ENCODE measurements at regions of chr9 and their contacts with region 1.

Region 1: DNA sequence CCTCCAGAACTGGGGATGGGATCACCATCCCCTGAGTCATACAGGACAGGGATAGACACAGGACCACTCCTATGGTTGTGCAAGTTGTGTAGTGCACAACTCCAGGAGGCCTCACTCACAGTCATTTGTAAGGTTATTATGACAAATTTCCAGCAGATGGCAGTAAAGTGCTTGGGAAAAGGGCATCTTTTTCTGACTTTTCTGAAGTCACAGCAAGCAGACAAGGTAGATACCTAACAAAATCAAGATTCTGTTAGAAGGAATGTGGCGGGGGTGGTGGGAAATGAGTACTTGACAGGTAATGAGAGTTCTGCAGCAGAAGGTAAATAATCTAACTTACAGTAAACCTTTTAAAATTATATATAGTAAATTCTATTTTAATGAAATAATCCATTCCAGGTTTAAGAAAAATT is 16.7 kb upstream of the KIF27 start:
- DNase-seq: no peak
- H3K4me3 ChIP-seq: no peak overlapping the region
- CTCF ChIP-seq: peak; percentile 45

Region 2: DNA sequence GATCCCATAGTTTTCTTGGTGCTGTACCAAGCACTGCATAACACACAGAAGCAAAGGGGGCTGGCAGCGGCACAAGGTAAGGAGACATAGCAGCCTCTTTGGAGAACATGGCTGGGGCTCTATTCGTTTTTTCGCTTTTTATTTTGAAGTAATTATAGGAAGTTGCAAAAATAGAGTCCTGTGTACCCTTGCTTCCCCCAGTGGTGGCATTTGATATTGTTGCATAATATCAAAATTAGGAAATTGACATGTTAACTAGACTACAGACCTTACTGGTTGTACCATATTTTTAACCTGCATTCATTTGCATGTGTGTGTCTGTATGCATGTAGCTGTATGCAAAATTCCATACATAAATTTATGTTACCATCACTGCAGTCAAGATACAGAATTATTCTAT is 223.6 kb before region 1 on chr9:
- CTCF ChIA-PET with region 1: no interaction called
- POLR2A ChIA-PET with region 1: no interaction called
- DNase-seq: no peak
- H3K4me3 ChIP-seq: no peak overlapping the region
- CTCF ChIP-seq: no peak

Region 3: GRCh38 chr9:83920927-83921707 is 16.8 kb before region 1 on chr9 and contains the start of gene KIF27:
- CTCF ChIA-PET with region 1: interaction called, 15 read pairs
- POLR2A ChIA-PET with region 1: no interaction called
- DNase-seq: peak; percentile 75
- H3K4me3 ChIP-seq: peak within 1 kb of the TSS; percentile 72
- CTCF ChIP-seq: peak; percentile 59

Region 4: GRCh38 chr9:83956434-83957247 is 18.7 kb after region 1 on chr9:
- CTCF ChIA-PET with region 1: interaction called, 10 read pairs
- POLR2A ChIA-PET with region 1: no interaction called
- DNase-seq: no peak
- H3K4me3 ChIP-seq: peak overlapping the region; percentile 60
- CTCF ChIP-seq: no peak

Region 5: DNA sequence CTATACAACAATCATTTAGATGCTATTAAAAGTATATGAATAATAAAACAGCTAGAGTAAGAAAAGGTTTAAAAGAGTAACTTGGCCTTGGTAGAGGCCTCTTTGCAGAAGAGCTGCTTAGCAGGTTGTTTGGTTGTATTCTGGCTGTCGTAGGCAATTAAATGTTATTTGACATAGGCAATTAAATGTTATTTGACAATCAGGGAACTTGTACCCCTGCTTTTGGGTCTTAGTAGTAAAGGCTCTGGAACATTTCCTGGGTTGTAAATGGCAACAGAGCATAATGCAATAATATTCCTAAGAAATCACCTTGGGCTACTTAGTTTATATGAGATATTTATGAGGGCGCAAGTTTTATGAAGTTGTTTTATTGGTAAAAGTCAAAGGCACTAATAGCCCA is 487.0 kb after region 1 on chr9:
- CTCF ChIA-PET with region 1: no interaction called
- POLR2A ChIA-PET with region 1: no interaction called
- DNase-seq: no peak
- H3K4me3 ChIP-seq: no peak overlapping the region
- CTCF ChIP-seq: no peak